ENCODE measurements at regions of chr22 and their contacts with region 1.

Region 1: DNA sequence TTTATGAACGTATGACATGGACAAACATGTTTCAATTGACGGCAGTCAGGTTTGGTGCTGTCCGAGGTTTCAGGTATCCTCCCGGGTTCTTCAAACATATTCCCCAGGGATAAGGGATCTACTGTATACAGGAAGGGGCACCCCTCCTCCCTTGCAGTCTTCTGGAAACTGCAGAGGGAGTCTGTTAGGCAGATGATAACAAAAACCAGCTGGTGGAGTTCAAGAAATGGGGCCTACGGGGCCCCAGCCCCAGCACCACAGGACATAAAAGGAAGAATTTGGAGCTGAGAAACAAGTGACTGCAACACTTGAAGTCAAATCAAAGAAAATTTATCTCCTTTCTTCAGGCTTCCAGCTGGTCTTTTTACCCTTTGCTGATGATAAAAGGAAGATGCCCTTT is 32.1 kb downstream of the SNU13 start:
- DNase-seq: no peak
- H3K4me3 Mint-ChIP-seq: no peak overlapping the region
- H3K27ac Mint-ChIP-seq: no peak overlapping the region
- H3K4me1 Mint-ChIP-seq: peaks cover 4% of the 10 kb centered on the region
- H3K27me3 Mint-ChIP-seq: no peaks in the 10 kb centered on the region
- CTCF ChIP-seq: no peak

Region 2: GRCh38 chr22:41642331-41643110 is 14.0 kb before region 1 on chr22:
- CTCF ChIA-PET with region 1: interaction called, 3 read pairs
- POLR2A ChIA-PET with region 1: interaction called, 12 read pairs
- intact Hi-C with region 1: no loop called
- DNase-seq: no peak
- H3K4me3 Mint-ChIP-seq: no peak overlapping the region
- H3K27ac Mint-ChIP-seq: peak overlapping the region; percentile 5
- H3K4me1 Mint-ChIP-seq: peaks cover 7% of the 10 kb centered on the region
- H3K27me3 Mint-ChIP-seq: no peaks in the 10 kb centered on the region
- CTCF ChIP-seq: no peak

Region 3: DNA sequence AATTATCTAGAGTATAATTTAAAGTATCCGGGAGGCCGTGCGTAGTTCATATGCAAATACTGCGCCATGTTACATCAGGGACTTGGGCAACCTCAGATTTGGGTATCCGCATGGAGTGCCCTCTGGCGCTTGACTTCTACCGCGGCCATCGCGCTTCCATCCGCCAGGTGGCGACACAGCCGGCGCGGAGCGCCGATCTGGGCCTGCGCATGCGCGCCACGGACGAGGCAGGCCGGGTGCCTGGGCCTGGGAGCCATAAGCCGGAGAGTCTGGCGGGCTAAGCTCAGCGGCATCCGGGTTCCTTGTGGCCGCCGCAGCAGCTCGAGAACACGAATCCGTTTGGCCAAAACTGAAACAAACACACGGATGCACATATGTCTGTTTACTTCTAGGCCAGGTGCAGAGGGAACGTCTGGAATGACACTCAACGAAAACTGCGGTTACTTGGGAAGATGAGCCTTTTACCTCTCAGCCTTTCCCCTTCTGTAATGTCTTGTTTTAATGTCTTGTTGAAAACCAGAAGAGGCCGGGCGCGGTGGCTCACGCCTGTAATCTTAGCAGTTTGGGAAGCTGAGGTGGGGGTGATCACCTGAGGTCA is 10.2 kb after region 1 on chr22:
- CTCF ChIA-PET with region 1: interaction called, 11 read pairs
- POLR2A ChIA-PET with region 1: interaction called, 6 read pairs
- intact Hi-C with region 1: no loop called
- DNase-seq: peak; percentile 91
- H3K4me3 Mint-ChIP-seq: peak overlapping the region; percentile 64
- H3K27ac Mint-ChIP-seq: peak overlapping the region; percentile 93
- H3K4me1 Mint-ChIP-seq: peaks cover 5% of the 10 kb centered on the region
- H3K27me3 Mint-ChIP-seq: no peaks in the 10 kb centered on the region
- CTCF ChIP-seq: peak; percentile 92